ENCODE measurements at regions of chr2 and their contacts with region 1.

Region 1: GRCh38 chr2:36663851-36664695 is 32.4 kb upstream of the VIT start:
- DNase-seq: peak; percentile 50
- ATAC-seq: no peak
- H3K4me3 ChIP-seq: no peak overlapping the region
- H3K4me3 Mint-ChIP-seq: no peak overlapping the region
- H3K27ac ChIP-seq: no peak overlapping the region
- H3K27ac Mint-ChIP-seq: no peak overlapping the region
- H3K4me1 ChIP-seq: no peaks in the 10 kb centered on the region
- H3K4me1 Mint-ChIP-seq: no peaks in the 10 kb centered on the region
- H3K27me3 ChIP-seq: peaks cover 0 to 8% (median 0%) of the 10 kb centered on the region in 4 experiments
- H3K27me3 Mint-ChIP-seq: peaks cover 5% of the 10 kb centered on the region
- CTCF ChIP-seq: peak; percentile 79

Region 2: DNA sequence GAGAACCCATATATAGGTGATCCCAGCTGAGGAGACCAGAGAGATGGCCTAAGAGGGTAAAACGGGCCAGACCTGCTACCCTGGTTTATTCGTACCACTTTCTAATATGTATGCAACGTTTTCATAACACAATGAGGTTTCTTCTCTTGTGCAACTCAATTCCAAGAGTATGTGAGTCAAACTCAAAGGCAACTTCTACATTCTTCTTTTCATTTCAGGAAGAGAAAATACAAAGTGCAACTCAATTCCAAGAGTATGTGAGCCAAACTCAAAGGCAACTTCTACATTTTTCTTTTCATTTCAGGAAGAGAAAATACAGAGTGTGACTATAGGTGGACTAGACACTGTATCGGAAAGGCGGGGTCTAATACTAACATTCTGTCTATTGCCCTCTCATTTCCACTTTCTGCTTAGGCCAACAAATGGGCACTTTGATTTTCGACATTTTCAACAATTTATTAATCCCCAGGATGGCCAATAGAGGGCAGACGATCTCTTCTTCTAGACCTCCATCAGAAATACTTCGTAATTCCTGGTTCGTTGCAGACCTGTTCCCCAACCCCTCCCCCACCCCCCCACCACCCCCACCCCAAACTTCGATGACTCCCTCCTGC is 312.2 kb before region 1 on chr2:
- CTCF ChIA-PET with region 1: interaction called, 17 read pairs
- POLR2A ChIA-PET with region 1: no interaction called
- intact Hi-C with region 1: no loop called
- DNase-seq: peak; percentile 63
- ATAC-seq: no peak
- H3K4me3 ChIP-seq: no peak overlapping the region
- H3K4me3 Mint-ChIP-seq: no peak overlapping the region
- H3K27ac ChIP-seq: no peak overlapping the region
- H3K27ac Mint-ChIP-seq: no peak overlapping the region
- H3K4me1 ChIP-seq: peaks cover 17 to 27% of the 10 kb centered on the region in 2 donors
- H3K4me1 Mint-ChIP-seq: peaks cover 18% of the 10 kb centered on the region
- H3K27me3 ChIP-seq: peaks cover 0 to 6% (median 0%) of the 10 kb centered on the region in 4 experiments
- H3K27me3 Mint-ChIP-seq: peaks cover 15% of the 10 kb centered on the region
- CTCF ChIP-seq: peak; percentile 38

Measured in B cell (primary cell).